Right ventricle myocardium inferior (tissue), 1 donor: ENCODE measurements at regions of chr10 and their contacts with region 1.

Region 1: DNA sequence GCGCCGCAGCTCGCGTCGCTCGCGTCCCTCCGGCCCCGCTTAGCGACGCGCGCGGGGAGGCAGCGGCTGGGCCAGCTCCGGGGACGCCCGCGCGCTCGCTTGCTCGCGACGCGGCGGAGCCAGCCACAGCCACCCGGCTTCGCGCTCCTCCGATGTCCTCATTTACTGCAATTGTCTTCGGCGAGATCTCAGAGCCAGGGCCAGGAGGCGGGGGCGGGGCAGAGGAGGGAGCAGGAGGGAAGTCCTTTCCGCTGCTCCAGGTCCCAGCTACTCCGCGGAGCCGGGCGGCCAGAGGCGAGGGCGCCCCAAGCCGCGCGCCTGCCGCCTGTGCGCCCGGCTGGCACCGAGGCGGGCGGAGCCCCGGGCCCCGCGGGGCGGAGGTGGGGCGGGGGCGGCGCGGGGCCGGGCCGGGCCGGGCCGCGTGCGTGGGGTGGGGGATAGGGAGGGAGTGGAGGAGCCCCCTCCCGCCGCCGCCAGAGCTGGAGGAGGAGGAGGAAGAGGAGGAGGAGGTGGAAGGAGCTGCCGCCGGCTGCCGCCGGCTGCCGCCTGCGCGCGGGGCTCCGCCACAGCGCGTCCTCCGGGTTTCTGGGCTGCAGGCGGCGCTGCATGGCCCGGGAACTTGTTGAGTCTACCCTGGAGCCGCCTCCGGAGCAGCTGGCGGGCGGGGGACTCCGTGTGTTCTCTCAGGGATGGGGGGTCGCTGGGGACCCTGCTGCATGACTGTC is at the start of gene INSYN2A:
- DNase-seq: no peak
- ATAC-seq: peak; percentile 28
- total RNA-seq, gene INSYN2A: not detected

Region 2: DNA sequence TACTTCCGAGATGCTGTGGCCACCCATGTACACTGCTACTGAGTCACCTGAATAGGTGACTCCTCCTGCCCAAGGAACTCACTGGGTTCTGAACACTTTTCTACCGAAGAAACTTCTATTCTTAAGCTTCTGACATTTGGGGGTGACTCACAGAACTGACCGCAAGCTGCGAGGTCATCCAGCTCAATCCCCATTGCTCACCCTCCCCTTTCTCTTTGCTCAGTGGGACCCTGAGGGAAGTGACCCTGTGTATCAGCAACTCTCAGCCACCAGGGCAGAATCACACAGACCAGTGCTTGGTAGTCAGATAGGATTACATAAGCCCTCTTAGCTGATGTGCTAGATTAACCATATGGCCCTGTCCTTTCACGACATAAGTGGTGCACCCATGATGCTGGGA is 46.3 kb before region 1 on chr10:
- intact Hi-C with region 1: loop called (anchors 5 kb)
- DNase-seq: no peak
- ATAC-seq: no peak

Region 3: DNA sequence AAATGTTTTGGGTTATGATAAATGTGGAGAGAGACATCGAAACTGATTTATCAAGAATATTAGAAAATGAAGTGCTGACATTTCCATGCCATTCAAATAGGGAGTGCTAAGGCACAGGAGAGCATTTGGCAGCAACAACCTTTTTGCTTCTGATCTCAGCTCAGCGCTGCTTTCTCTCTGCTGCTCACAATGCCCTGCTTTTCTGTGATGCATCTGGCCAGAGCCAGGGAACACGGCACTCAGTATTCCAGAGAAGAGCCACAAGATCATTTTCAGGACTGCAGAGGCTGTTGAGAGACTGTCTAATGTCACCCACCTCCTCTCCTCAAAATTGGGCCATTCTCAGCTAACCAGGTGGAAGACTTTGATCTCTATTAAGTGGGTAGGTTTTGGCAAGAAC is 28.1 kb before region 1 on chr10:
- intact Hi-C with region 1: no loop called
- DNase-seq: no peak
- ATAC-seq: no peak

Region 4: GRCh38 chr10:127245456-127245855 is 49.1 kb after region 1 on chr10:
- intact Hi-C with region 1: no loop called
- DNase-seq: no peak
- ATAC-seq: no peak